HCT116 (cell line): ENCODE measurements at regions of chr17 and their contacts with region 1.

Region 1: GRCh38 chr17:7834962-7835813 is 1.2 kb downstream of the KDM6B start:
- DNase-seq: peak; percentile 98
- ATAC-seq: peak; percentile 69
- H3K4me3 ChIP-seq: peak overlapping the region; percentile 74 to 82
- H3K27ac ChIP-seq: peak overlapping the region; percentile 98
- H3K4me1 ChIP-seq: peaks cover 32 to 64% of the 10 kb centered on the region in 2 experiments
- H3K27me3 ChIP-seq: no peaks in the 10 kb centered on the region
- CTCF ChIP-seq: peak in 2 of 3 experiments; percentile 70 to 85; a peak in 4 of 6 replicates
- POLR2A ChIP-seq: peak; percentile 60
- RAD21 ChIP-seq: no peak

Region 2: DNA sequence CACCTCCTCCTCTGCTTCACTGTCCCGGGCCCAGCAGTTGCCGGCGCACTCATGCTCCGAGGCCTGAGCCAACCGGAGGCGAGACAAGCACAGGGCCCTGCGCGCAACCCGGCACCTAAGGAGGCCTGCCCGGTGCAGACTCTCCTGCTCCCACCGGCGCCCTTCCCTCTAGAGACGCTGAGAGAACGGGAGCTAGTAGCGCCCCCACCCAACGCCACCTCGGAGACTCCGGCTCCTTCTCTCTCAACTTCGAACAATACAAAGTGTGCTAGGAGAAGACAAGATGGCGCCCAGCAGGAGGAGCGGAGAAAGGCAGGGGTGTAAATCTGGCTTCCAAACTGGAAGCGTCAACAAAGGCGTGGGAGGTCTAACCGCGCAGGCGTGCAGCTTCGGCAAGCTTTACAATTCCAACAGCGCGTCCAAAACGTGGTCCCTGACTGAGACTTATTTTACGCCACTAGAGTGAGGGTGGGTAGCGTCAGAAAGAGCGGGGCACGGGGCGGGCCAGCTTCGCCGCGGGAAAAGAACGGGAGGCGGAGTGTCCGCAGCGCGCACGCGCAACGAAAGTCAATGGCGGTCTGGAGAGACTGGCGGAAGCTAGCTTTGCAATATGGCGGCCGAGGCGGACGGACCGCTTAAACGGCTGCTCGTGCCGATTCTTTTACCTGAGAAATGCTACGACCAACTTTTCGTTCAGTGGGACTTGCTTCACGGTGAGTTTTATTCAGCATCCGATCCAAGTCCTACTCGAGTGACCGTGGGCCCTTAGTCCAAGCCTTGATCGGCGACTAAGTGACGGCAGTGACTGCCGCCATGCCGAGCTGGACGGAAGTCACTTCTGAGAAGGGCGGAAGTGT is 251.7 kb before region 1 on chr17 and contains the start of gene MPDU1:
- CTCF ChIA-PET with region 1: interaction called, 6 read pairs
- POLR2A ChIA-PET with region 1: no interaction called
- RAD21 ChIA-PET with region 1: no interaction called
- intact Hi-C with region 1: loop called (anchors 5 kb)
- DNase-seq: peak; percentile 90
- ATAC-seq: peak; percentile 67
- H3K4me3 ChIP-seq: peak within 1 kb of the TSS; percentile 60 to 97
- H3K27ac ChIP-seq: peak within 1 kb of the TSS; percentile 90
- H3K4me1 ChIP-seq: peaks cover 14 to 53% of the 10 kb centered on the region in 2 experiments
- H3K27me3 ChIP-seq: no peaks in the 10 kb centered on the region
- CTCF ChIP-seq: no peak
- POLR2A ChIP-seq: peak; percentile 59
- RAD21 ChIP-seq: no peak
- total RNA-seq, gene MPDU1: 50.9 TPM

Region 3: DNA sequence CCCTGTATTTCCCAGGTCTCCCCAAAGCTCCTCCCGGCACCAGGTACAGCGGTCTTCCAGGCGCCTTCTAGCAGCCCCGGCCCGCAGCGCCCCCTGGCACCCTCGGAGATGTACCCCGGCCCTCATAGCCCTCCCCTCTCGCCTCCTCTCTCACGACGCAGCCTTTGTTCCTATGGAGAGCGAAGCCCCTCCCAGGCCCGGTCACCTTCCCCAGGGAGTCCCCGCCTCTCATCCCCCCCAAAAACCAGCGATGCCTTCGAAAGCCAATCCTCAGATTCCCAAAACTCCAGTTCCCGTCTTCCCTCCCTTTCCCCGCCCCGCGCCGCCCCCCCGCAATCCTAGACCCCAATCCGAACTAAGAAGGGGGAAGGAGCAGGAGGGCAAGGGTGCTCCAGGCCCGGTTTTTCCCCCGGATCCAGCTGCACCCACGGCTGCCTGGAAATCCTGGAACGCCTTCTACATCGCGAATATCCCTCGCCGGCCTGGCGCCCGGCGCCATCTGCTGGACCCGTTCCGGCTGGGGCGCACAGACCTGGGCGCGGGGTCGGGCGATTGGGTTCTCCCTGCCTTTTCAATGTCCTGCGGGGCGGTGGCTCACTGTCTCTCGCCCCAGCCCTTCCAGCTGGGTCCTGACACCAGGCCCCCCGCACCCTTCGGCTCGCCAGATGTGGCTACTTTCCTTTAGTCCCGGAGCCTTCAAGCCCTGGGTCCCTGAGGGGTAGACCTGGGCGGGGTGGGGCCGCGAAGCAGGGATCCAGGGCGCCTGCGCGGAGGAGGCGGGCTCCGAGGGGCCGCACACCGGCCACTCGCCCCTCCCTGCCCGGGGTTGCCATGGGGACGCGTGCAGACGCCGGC is 118.1 kb before region 1 on chr17 and contains the start of gene DNAH2:
- CTCF ChIA-PET with region 1: no interaction called
- POLR2A ChIA-PET with region 1: no interaction called
- RAD21 ChIA-PET with region 1: no interaction called
- intact Hi-C with region 1: loop called (anchors 1 kb)
- DNase-seq: peak; percentile 89
- ATAC-seq: peak; percentile 91
- H3K4me3 ChIP-seq: peak within 1 kb of the TSS; percentile 64 to 70
- H3K27ac ChIP-seq: peak within 1 kb of the TSS; percentile 70
- H3K4me1 ChIP-seq: peaks cover 12 to 26% of the 10 kb centered on the region in 2 experiments
- H3K27me3 ChIP-seq: no peaks in the 10 kb centered on the region
- CTCF ChIP-seq: peak; percentile 53 to 57 (median 57); a peak in 5 of 6 replicates
- POLR2A ChIP-seq: peak; percentile 47
- RAD21 ChIP-seq: peak; percentile 72
- total RNA-seq, gene DNAH2: 2.0 TPM

Region 4: DNA sequence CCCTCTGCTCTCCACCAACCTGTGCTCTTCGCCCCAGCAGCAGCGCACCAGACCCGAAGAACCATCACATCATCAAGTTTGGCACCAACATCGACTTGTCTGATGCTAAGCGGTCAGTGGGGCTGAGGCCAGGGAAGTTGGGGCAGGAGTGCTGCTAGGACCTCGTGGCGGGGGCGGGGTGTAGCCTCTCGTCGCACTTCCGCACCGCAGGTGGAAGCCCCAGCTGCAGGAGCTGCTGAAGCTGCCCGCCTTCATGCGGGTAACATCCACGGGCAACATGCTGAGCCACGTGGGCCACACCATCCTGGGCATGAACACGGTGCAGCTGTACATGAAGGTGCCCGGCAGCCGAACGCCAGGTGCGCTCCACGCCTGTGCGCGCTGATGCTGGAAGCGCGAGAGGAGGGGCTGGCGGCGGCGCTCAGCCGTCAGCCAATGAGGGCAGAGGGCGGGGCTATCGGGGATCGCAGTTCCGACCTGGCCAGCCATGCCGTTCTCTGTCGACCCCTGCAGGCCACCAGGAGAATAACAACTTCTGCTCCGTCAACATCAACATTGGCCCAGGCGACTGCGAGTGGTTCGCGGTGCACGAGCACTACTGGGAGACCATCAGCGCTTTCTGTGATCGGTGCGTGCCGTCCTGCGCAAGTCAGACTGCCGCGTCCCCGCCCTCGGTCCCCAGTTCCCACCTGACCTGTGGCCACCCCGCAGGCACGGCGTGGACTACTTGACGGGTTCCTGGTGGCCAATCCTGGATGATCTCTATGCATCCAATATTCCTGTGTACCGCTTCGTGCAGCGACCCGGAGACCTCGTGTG is 16.5 kb after region 1 on chr17:
- CTCF ChIA-PET with region 1: interaction called, 11 read pairs
- POLR2A ChIA-PET with region 1: interaction called, 22 read pairs
- RAD21 ChIA-PET with region 1: interaction called, 4 to 6 read pairs
- intact Hi-C with region 1: loop called (anchors 2 kb)
- DNase-seq: no peak
- ATAC-seq: peak; percentile 88
- H3K4me3 ChIP-seq: peak overlapping the region; percentile 50 to 77
- H3K27ac ChIP-seq: peak overlapping the region; percentile 68
- H3K4me1 ChIP-seq: peaks cover 20 to 43% of the 10 kb centered on the region in 2 experiments
- H3K27me3 ChIP-seq: no peaks in the 10 kb centered on the region
- CTCF ChIP-seq: peak; percentile 85 to 93 (median 88)
- POLR2A ChIP-seq: peak; percentile 31
- RAD21 ChIP-seq: peak; percentile 98

Region 5: DNA sequence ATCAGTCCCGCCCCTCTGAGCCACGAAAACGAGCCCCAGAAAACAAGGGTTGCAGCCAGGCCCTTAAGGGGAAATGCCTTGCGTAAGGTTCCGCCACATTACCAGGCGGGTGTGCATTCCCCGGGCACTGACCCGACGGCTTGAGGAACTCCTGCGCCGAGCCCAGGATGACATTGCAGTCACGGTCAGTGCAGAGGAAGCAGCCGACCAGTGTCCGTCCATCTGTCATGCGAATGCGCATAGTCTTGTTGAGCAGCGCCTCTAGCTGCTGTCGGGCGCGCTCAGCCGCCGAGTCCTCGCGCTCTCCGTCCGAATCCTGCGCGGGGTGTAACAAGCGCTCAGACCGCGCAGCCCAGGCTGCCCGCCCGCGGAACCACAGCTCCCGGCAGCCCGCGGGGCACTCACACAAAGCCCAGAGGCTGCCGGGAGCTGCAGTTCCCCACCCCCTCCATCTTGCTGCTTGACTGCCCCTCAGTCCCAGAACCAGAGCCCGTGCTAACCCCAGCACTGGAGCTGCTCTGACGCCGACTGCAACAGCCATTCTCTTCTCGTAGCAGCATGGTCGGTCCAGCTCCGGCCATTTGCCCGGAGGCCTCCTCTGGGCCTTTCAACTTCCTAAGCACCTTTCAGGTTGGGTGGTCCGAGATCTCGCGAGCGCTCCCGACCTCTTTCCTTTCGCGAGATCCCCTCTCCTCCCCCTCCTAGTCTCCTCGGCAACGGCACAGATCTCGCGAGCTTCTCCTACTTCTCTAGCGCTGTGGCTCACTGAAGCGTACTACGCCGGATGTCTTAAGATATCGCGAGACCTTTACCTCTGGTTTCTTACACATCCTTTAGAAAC is 21.9 kb after region 1 on chr17 and contains the start of gene NAA38:
- CTCF ChIA-PET with region 1: interaction called, 11 read pairs
- POLR2A ChIA-PET with region 1: interaction called, 22 read pairs
- RAD21 ChIA-PET with region 1: interaction called, 4 to 6 read pairs
- intact Hi-C with region 1: loop called (anchors 2 kb)
- DNase-seq: peak; percentile 99
- ATAC-seq: peak; percentile 85
- H3K4me3 ChIP-seq: peak within 1 kb of the TSS; percentile 67 to 94
- H3K27ac ChIP-seq: peak within 1 kb of the TSS; percentile 92
- H3K4me1 ChIP-seq: peaks cover 10 to 28% of the 10 kb centered on the region in 2 experiments; a peak in 3 of 4 replicates
- H3K27me3 ChIP-seq: no peaks in the 10 kb centered on the region
- CTCF ChIP-seq: peak; percentile 32 to 48 (median 40); a peak in 5 of 6 replicates
- POLR2A ChIP-seq: peak; percentile 12
- RAD21 ChIP-seq: peak; percentile 58
- total RNA-seq, gene NAA38: 103 TPM

Region 6: GRCh38 chr17:7887482-7888183 is 52.4 kb after region 1 on chr17:
- CTCF ChIA-PET with region 1: no interaction called
- POLR2A ChIA-PET with region 1: no interaction called
- RAD21 ChIA-PET with region 1: no interaction called
- intact Hi-C with region 1: loop called (anchors 2 kb)
- DNase-seq: peak; percentile 84
- ATAC-seq: peak; percentile 85
- H3K4me3 ChIP-seq: peak overlapping the region; percentile 56 to 82
- H3K27ac ChIP-seq: peak overlapping the region; percentile 97
- H3K4me1 ChIP-seq: peaks cover 39 to 53% of the 10 kb centered on the region in 2 experiments
- H3K27me3 ChIP-seq: no peaks in the 10 kb centered on the region
- CTCF ChIP-seq: no peak
- POLR2A ChIP-seq: peak; percentile 59
- RAD21 ChIP-seq: no peak